Left cardiac atrium (tissue), 4 donors: ENCODE measurements at regions of chr7 and their contacts with region 1.

Region 1: DNA sequence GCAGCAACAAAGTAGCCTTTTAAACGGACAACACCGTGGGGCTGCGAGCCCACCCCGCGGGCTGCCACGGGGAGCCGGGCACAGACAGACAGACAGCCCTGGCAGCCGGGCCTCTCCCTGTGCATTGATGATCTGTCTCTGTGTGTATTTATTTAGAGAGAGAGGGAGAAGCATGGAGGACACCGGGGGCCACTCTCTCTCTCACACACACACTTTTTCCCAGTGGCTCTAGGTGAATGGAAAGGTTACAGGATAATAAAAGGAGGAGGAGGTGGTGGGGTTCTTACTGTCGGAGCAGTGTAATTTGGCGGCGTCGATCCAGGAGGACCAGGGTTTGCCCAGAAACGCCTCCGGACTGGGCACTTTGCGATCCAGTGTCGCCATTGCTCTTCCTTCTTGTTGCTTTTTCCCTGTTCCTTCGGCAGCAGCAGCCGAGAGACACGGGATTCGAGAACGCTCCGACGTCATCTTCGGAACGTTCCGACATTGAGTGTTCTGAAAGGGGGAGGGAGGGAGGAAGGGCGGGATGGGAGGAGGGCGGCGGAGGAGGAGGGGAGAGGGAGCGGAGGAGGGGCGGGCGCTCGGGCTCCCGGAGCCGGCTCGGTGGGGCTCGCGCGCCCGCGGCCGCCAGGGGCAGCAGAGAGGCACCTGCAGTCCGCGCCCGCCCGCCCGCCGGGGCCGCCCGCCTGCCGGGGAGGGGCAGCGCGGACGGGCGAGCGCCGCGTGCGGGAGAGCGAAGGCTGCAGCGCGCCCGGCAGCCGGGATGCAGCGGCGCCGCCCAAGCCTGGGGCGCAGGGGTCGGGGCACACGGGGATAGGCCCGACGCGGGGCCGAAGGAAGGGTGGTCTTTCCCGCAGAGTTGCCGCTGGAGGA is at the start of gene ATXN7L1:
- DNase-seq: peak; percentile 94
- ATAC-seq: peak; percentile 96 to 98
- total RNA-seq, gene ATXN7L1: 5.7 to 6.0 TPM

Region 2: GRCh38 chr7:105963038-105963667 is 86.8 kb after region 1 on chr7 and contains the start of gene CDHR3:
- intact Hi-C with region 1: no loop called
- DNase-seq: no peak
- ATAC-seq: no peak
- total RNA-seq, gene CDHR3: 1.9 to 2.9 TPM

Region 3: GRCh38 chr7:106009403-106010226 is 133.3 kb after region 1 on chr7:
- intact Hi-C with region 1: loop called in 1 of 2 experiments (anchors 10 kb)
- DNase-seq: peak; percentile 80
- ATAC-seq: peak; percentile 91 to 98

Region 4: DNA sequence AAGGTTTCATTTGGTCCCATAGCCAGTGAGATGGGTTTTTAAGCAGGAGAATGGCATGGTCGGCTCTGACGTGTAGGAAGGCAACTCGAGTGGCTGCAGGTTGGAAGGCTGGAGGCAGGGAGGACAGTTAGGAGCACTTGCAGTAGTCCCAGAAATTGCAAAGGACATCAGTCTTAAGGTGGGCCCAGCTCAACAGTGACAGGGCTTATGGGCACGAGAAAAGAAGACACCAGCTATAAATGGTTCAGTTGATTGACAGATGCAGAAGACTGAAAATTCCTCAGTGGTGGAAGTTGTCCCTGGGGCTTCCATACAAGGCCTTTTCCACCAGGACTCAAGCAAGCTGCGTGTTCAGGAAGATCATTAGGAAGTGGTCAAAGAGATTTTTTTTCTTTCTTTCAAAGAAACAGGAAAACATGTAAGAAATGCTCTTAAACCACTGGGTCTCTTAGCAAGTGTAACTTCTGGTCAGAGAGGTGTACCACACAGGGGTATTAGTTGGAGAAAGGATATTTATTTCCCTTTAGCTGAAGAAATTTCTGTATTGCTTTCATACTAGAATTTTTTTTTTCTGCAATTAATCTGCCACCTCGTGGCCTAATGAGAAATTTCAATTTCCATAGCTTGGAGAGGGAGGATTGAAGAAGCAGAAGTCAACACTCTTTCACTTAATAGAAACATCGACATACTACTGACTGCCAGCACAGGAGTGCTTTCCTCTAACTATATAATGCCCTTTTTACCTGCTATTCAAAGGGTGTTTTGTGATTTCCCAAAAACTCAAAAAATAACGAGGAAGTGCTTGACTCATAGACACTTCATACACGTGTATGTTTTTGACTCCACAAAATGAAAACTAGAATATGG is 585.9 kb after region 1 on chr7:
- intact Hi-C with region 1: no loop called
- DNase-seq: no peak
- ATAC-seq: peak; percentile 35 to 57